Activated T-helper 2 cell treated with anti-CD3 and anti-CD28 coated beads, Interferon-gamma antibody, Interleukin-2, Interleukin-4, amounts not matched to agents 10 μg/mL and 5 μg/mL and 100 μg/mL, durations not matched to agents 14 hours and 24 hours and 36 hours (primary cell): ENCODE measurements at regions of chr7 and their contacts with region 1.

Region 1: GRCh38 chr7:159017741-159018140 is 126.9 kb downstream of the VIPR2 start:
- DNase-seq: no peak
- H3K4me3 Mint-ChIP-seq: no peak overlapping the region
- H3K27ac Mint-ChIP-seq: peak overlapping the region; percentile 35
- H3K4me1 Mint-ChIP-seq: peaks cover 20% of the 10 kb centered on the region
- H3K27me3 Mint-ChIP-seq: peaks cover 7% of the 10 kb centered on the region

Region 2: DNA sequence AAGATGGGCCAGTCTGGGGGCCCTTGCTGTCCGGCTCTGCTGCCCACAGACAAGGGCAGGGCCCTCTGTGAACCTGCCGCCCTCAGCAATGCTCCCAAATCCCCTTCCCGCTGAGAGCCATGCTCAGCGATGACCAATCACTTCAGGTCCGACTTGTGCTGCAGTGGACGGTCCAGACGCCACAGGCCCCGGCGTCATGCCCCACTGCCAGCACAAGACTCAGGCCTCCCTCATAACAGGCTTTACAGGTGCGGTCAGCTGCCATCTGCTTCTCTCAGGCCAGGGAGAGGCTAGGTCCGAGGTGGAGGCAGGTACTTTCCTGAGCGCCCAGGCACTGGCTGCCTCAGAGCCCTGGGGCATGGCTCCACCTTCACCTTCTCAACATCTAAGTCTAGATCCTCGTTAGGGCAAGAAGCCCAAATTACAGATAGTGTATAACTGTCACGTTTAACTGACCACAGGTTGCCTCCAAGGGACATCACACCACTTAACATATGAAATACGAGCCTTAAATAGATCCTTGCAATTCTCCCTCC is 823.3 kb before region 1 on chr7:
- intact Hi-C with region 1: no loop called
- DNase-seq: no peak
- H3K4me3 Mint-ChIP-seq: no peak overlapping the region
- H3K27ac Mint-ChIP-seq: no peak overlapping the region
- H3K4me1 Mint-ChIP-seq: no peaks in the 10 kb centered on the region
- H3K27me3 Mint-ChIP-seq: no peaks in the 10 kb centered on the region

Region 3: GRCh38 chr7:159004411-159004810 is 13.3 kb before region 1 on chr7:
- intact Hi-C with region 1: loop called (anchors 1 kb)
- DNase-seq: no peak
- H3K4me3 Mint-ChIP-seq: peak overlapping the region; percentile 14
- H3K27ac Mint-ChIP-seq: peak overlapping the region; percentile 85
- H3K4me1 Mint-ChIP-seq: peaks cover 20% of the 10 kb centered on the region
- H3K27me3 Mint-ChIP-seq: no peaks in the 10 kb centered on the region

Region 4: DNA sequence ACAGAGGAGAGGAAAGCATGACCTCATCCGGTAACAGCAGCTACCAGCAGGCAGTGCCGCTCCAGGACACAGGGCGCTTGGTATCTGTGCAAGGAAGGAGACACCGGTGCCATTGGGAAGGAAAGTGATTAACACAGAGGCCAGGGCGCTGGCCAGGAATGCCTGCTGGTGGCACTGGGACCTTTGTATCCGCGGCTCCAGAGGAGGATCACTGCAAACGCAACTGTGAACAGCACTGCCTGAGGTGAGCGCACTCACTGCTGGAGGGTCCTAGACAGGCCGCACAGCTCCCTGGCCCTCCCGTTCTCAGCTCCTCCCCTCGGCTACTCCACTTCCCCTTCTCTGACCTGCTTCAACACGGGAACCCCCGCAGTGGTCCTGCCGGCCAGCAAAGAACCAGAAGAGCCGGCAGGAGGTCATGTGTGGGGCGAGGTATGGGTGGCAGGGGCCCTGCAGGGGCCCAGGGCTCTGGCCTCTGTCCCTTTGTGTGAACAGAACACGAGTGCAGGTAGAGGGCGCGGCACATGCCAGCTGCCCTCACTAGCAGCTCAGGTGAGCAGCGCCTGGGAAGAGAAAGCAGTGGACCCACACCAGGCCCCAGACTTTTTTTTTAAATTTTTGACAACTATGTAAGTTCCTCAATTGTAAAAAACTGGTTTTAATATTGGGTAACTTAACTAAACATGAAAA is 19.3 kb after region 1 on chr7:
- intact Hi-C with region 1: no loop called
- DNase-seq: no peak
- H3K4me3 Mint-ChIP-seq: no peak overlapping the region
- H3K27ac Mint-ChIP-seq: no peak overlapping the region
- H3K4me1 Mint-ChIP-seq: peaks cover 6% of the 10 kb centered on the region
- H3K27me3 Mint-ChIP-seq: no peaks in the 10 kb centered on the region